Naive thymus-derived CD4-positive, alpha-beta T cell (primary cell): ENCODE measurements at regions of chr11 and their contacts with region 1.

Region 1: GRCh38 chr11:58562375-58562800 is 13.3 kb downstream of the LPXN start:
- DNase-seq: no peak
- ATAC-seq: peak; percentile 38
- H3K4me3 ChIP-seq: no peak overlapping the region
- H3K4me3 Mint-ChIP-seq: peak overlapping the region; percentile 32 to 79 (median 64)
- H3K27ac ChIP-seq: peak overlapping the region; percentile 12
- H3K27ac Mint-ChIP-seq: peak overlapping the region; percentile 28 to 89 (median 75)
- H3K4me1 ChIP-seq: peaks cover 24 to 41% of the 10 kb centered on the region in 2 donors
- H3K4me1 Mint-ChIP-seq: peaks cover 45 to 82% (median 64%) of the 10 kb centered on the region in 7 donors
- H3K27me3 ChIP-seq: no peaks in the 10 kb centered on the region
- H3K27me3 Mint-ChIP-seq: no peaks in the 10 kb centered on the region

Region 2: GRCh38 chr11:58530236-58530635 is 32.2 kb before region 1 on chr11:
- CTCF ChIA-PET with region 1: interaction called, 27 read pairs
- POLR2A ChIA-PET with region 1: interaction called, 12 read pairs
- intact Hi-C with region 1: loop called in 1 of 2 experiments (anchors 2 kb)
- DNase-seq: peak in 7 of 9 donors; percentile 49 to 73 (median 64)
- ATAC-seq: peak; percentile 81
- H3K4me3 ChIP-seq: peak overlapping the region; percentile 6
- H3K4me3 Mint-ChIP-seq: peak overlapping the region; percentile 10 to 73 (median 57)
- H3K27ac ChIP-seq: peak overlapping the region; percentile 65
- H3K27ac Mint-ChIP-seq: peak overlapping the region; percentile 59 to 99 (median 90)
- H3K4me1 ChIP-seq: peaks cover 7 to 41% of the 10 kb centered on the region in 2 donors
- H3K4me1 Mint-ChIP-seq: peaks cover 9 to 89% (median 55%) of the 10 kb centered on the region in 7 donors
- H3K27me3 ChIP-seq: no peaks in the 10 kb centered on the region
- H3K27me3 Mint-ChIP-seq: no peaks in the 10 kb centered on the region

Region 3: GRCh38 chr11:58549644-58550043 is 12.7 kb before region 1 on chr11:
- CTCF ChIA-PET with region 1: interaction called, 16 read pairs
- POLR2A ChIA-PET with region 1: interaction called, 4 read pairs
- intact Hi-C with region 1: loop called in 1 of 2 experiments (anchors 1 kb)
- DNase-seq: no peak
- ATAC-seq: no peak
- H3K4me3 ChIP-seq: no peak overlapping the region
- H3K4me3 Mint-ChIP-seq: no peak overlapping the region
- H3K27ac ChIP-seq: no peak overlapping the region
- H3K27ac Mint-ChIP-seq: peak overlapping the region in 1 of 9 donors; percentile 63
- H3K4me1 ChIP-seq: no peaks in the 10 kb centered on the region
- H3K4me1 Mint-ChIP-seq: peaks cover 1 to 49% (median 20%) of the 10 kb centered on the region in 7 donors
- H3K27me3 ChIP-seq: no peaks in the 10 kb centered on the region
- H3K27me3 Mint-ChIP-seq: no peaks in the 10 kb centered on the region

Region 4: GRCh38 chr11:58573451-58574104 is 11.2 kb after region 1 on chr11:
- CTCF ChIA-PET with region 1: interaction called, 26 read pairs
- POLR2A ChIA-PET with region 1: interaction called, 60 read pairs
- intact Hi-C with region 1: no loop called
- DNase-seq: peak in 8 of 9 donors; percentile 41 to 66 (median 58)
- ATAC-seq: peak; percentile 29
- H3K4me3 ChIP-seq: peak overlapping the region; percentile 99
- H3K4me3 Mint-ChIP-seq: peak overlapping the region; percentile 87 to 99 (median 96)
- H3K27ac ChIP-seq: peak overlapping the region; percentile 98
- H3K27ac Mint-ChIP-seq: peak overlapping the region; percentile 90 to 100 (median 98)
- H3K4me1 ChIP-seq: peaks cover 29 to 44% of the 10 kb centered on the region in 2 donors
- H3K4me1 Mint-ChIP-seq: peaks cover 27 to 84% (median 70%) of the 10 kb centered on the region in 7 donors
- H3K27me3 ChIP-seq: no peaks in the 10 kb centered on the region
- H3K27me3 Mint-ChIP-seq: peaks cover 0 to 5% (median 0%) of the 10 kb centered on the region in 5 donors